Panc1 (cell line): ENCODE measurements at regions of chr13 and their contacts with region 1.

Region 1: DNA sequence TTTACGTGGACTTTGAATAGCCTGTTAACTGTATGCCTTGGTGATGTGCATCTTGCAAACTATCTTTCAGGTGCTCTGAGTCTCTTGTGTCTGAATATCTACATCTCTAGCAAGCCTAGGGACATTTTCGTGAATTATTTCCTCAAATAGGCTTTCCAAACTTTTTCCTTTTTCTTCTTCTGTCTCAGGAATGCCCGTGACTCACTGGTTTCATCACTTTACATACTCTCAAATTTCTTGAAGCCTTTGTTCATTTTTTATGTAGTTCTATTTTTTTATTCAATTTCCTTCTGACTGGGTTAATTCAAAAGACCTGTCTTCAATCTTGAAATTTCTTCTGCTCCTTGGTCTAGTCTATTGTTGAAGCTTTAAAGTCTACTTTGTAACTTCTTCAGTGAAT is 332.2 kb downstream of the OXGR1 start:
- DNase-seq: no peak
- ATAC-seq: no peak
- H3K4me3 ChIP-seq: no peak overlapping the region
- H3K27ac ChIP-seq: no peak overlapping the region
- H3K4me1 ChIP-seq: no peaks in the 10 kb centered on the region
- H3K27me3 ChIP-seq: no peaks in the 10 kb centered on the region
- CTCF ChIP-seq: no peak

Region 2: GRCh38 chr13:95697052-95697680 is 964.9 kb before region 1 on chr13:
- CTCF ChIA-PET with region 1: no interaction called
- POLR2A ChIA-PET with region 1: no interaction called
- in situ Hi-C with region 1: no loop called
- intact Hi-C with region 1: no loop called
- DNase-seq: no peak
- ATAC-seq: no peak
- H3K4me3 ChIP-seq: no peak overlapping the region
- H3K27ac ChIP-seq: no peak overlapping the region
- H3K4me1 ChIP-seq: peaks cover 4% of the 10 kb centered on the region; the same call in 1 of the 2 replicates
- H3K27me3 ChIP-seq: no peaks in the 10 kb centered on the region
- CTCF ChIP-seq: no peak

Region 3: GRCh38 chr13:96720446-96720845 is 58.4 kb after region 1 on chr13:
- CTCF ChIA-PET with region 1: no interaction called
- POLR2A ChIA-PET with region 1: interaction called, 16 read pairs
- in situ Hi-C with region 1: no loop called
- intact Hi-C with region 1: no loop called
- DNase-seq: no peak
- ATAC-seq: no peak
- H3K4me3 ChIP-seq: no peak overlapping the region
- H3K27ac ChIP-seq: no peak overlapping the region
- H3K4me1 ChIP-seq: no peaks in the 10 kb centered on the region
- H3K27me3 ChIP-seq: peaks cover 2% of the 10 kb centered on the region; the same call in 1 of the 2 replicates
- CTCF ChIP-seq: no peak

Region 4: GRCh38 chr13:96880419-96880818 is 218.4 kb after region 1 on chr13:
- CTCF ChIA-PET with region 1: no interaction called
- POLR2A ChIA-PET with region 1: no interaction called
- in situ Hi-C with region 1: no loop called
- intact Hi-C with region 1: no loop called
- DNase-seq: no peak
- ATAC-seq: no peak
- H3K4me3 ChIP-seq: no peak overlapping the region
- H3K27ac ChIP-seq: no peak overlapping the region
- H3K4me1 ChIP-seq: no peaks in the 10 kb centered on the region
- H3K27me3 ChIP-seq: no peaks in the 10 kb centered on the region
- CTCF ChIP-seq: no peak